ENCODE measurements at regions of chr1 and their contacts with region 1.

Region 1: DNA sequence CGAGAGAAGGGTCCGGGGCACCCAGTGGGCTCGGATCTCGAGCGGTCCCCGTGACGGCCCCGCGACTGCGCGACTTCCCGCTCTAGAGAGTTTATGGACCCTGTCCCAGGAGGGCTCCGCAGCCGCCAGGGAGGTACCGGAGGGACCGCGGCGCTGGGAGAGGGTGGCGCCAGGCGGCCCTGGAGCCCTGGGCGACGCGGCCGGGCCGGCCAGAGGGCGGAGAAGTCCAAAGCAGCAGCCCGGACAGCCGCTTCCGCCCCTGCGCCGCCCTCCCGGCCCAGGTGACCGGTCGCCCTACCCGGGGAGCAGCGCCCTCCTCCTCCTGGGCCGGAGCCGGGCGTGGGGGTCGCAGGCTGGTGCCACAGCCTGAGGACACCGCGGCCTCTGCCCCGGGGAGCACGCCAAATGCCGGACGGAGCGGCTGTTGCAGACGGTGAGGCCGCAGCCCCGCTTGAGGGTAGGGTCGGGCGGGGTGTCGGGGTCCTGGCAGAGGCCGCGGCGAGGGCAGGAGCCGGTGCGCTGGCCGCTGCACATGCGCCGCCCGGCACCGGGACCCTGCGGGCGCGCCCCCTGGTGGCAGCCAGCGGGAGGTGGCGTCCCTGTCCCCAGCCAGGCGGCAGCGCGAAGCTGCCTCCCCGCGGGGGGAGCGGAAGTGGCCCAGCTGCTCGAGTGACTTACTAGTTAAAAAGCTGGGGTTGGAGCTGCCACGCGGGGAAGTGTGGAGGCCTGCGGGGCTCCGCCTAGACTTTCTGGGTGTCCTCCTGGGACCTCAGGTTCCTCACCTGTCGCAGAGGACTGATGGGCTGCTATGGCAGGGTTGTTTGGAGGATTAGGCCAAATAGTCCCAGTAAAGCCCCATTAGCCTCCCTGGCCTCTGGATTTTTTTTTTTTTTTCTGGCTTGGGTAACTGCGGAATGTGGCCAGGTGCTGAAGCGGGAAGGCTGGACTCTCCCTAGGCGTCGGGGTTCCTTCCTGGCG is 20.9 kb upstream of the ZNF678 start:
- DNase-seq: peak; percentile 82 to 94 (median 90)
- ATAC-seq: peak; percentile 97
- H3K4me3 ChIP-seq: peak overlapping the region; percentile 55
- H3K4me3 Mint-ChIP-seq: peak overlapping the region; percentile 57 to 79 (median 67)
- H3K27ac ChIP-seq: peak overlapping the region; percentile 17
- H3K27ac Mint-ChIP-seq: peak overlapping the region in 7 of 9 donors; percentile 23 to 86 (median 56)
- H3K4me1 ChIP-seq: peaks cover 3 to 10% of the 10 kb centered on the region in 2 donors
- H3K4me1 Mint-ChIP-seq: peaks cover 0 to 7% (median 5%) of the 10 kb centered on the region in 7 donors
- H3K27me3 ChIP-seq: no peaks in the 10 kb centered on the region
- H3K27me3 Mint-ChIP-seq: peaks cover 0 to 6% (median 0%) of the 10 kb centered on the region in 5 donors

Region 2: DNA sequence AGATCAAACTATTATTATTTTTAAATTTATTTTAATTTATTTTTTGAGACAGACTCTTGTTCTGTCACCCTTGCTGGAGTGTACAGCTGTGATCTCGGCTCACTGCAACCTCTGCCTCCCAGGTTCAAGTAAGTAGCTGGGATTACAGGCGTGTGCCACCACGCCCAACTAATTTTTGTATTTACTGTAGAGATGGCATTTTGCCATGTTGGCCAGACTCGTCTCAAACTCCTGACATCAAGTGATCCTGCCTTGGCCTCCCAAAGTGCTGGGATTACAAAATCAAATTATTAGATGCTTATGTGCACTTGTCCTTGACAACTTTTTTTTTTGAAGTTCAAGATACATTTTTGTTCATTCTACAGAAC is 1248.9 kb before region 1 on chr1:
- CTCF ChIA-PET with region 1: no interaction called
- POLR2A ChIA-PET with region 1: no interaction called
- intact Hi-C with region 1: no loop called
- DNase-seq: no peak
- ATAC-seq: no peak
- H3K4me3 ChIP-seq: no peak overlapping the region
- H3K4me3 Mint-ChIP-seq: no peak overlapping the region
- H3K27ac ChIP-seq: no peak overlapping the region
- H3K27ac Mint-ChIP-seq: no peak overlapping the region
- H3K4me1 ChIP-seq: no peaks in the 10 kb centered on the region
- H3K4me1 Mint-ChIP-seq: no peaks in the 10 kb centered on the region
- H3K27me3 ChIP-seq: no peaks in the 10 kb centered on the region
- H3K27me3 Mint-ChIP-seq: no peaks in the 10 kb centered on the region

Region 3: GRCh38 chr1:226626577-226626956 is 915.9 kb before region 1 on chr1:
- CTCF ChIA-PET with region 1: no interaction called
- POLR2A ChIA-PET with region 1: no interaction called
- intact Hi-C with region 1: loop called (anchors 5 kb)
- DNase-seq: peak; percentile 62 to 85 (median 76)
- ATAC-seq: peak; percentile 97
- H3K4me3 ChIP-seq: peak overlapping the region; percentile 25
- H3K4me3 Mint-ChIP-seq: peak overlapping the region; percentile 29 to 72 (median 56)
- H3K27ac ChIP-seq: no peak overlapping the region
- H3K27ac Mint-ChIP-seq: peak overlapping the region in 7 of 9 donors; percentile 43 to 85 (median 67)
- H3K4me1 ChIP-seq: peaks cover 8 to 10% of the 10 kb centered on the region in 2 donors
- H3K4me1 Mint-ChIP-seq: peaks cover 9 to 33% (median 27%) of the 10 kb centered on the region in 7 donors
- H3K27me3 ChIP-seq: no peaks in the 10 kb centered on the region
- H3K27me3 Mint-ChIP-seq: peaks cover 0 to 8% (median 0%) of the 10 kb centered on the region in 5 donors

Region 4: GRCh38 chr1:227482023-227482299 is 60.5 kb before region 1 on chr1:
- CTCF ChIA-PET with region 1: no interaction called
- POLR2A ChIA-PET with region 1: no interaction called
- intact Hi-C with region 1: loop called (anchors 1 to 5 kb)
- DNase-seq: no peak
- ATAC-seq: no peak
- H3K4me3 ChIP-seq: no peak overlapping the region
- H3K4me3 Mint-ChIP-seq: no peak overlapping the region
- H3K27ac ChIP-seq: no peak overlapping the region
- H3K27ac Mint-ChIP-seq: no peak overlapping the region
- H3K4me1 ChIP-seq: no peaks in the 10 kb centered on the region
- H3K4me1 Mint-ChIP-seq: no peaks in the 10 kb centered on the region
- H3K27me3 ChIP-seq: no peaks in the 10 kb centered on the region
- H3K27me3 Mint-ChIP-seq: peaks cover 17 to 47% (median 27%) of the 10 kb centered on the region in 5 donors

Region 5: DNA sequence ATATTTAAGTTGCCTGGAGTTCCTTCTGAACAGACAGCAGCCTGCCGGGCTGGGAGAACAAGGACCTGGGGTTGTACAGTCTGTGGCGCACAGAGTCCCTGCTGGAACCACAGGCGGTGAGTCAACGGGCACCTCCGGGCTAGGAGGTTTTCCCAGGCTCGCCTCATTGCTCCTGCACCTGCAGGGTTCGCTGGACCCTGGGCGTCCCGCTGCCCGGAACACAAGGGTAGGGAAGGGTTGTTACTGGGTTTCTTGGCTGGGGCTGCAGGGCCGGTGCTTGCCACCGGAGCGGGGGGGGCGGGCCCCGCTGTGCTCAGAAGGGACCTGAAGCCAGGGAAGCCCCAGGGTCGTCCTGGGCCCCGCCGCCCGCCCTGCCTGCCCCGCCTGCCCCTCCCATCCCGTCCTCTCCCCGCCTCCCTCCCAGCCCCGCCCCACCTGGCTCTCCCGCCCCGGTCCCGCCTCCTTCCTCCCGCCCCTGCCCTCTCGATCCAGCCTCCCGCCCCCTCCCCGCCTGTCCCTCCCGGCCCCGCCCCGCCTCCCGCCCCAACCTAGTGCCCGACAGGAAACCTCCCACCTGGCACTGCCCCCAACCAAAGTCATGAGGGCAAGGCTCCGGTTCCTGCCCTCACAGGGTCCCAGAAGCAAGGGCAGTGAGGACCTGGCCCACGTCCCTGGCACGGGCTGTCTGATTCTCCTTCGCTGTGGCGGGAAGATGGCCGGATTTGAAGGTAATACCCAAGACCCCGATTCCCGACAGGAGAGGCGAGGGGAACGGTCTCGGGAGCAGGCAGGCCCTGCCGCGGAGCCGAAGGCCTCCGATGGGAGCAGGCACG is 185.8 kb after region 1 on chr1:
- CTCF ChIA-PET with region 1: no interaction called
- POLR2A ChIA-PET with region 1: no interaction called
- intact Hi-C with region 1: loop called in 1 of 2 experiments (anchors 1 kb)
- DNase-seq: peak in 7 of 9 donors; percentile 23 to 63 (median 39)
- ATAC-seq: peak; percentile 69
- H3K4me3 ChIP-seq: peak overlapping the region; percentile 59
- H3K4me3 Mint-ChIP-seq: peak overlapping the region; percentile 78 to 89 (median 87)
- H3K27ac ChIP-seq: peak overlapping the region; percentile 69
- H3K27ac Mint-ChIP-seq: peak overlapping the region; percentile 43 to 90 (median 74)
- H3K4me1 ChIP-seq: peaks cover 0 to 10% of the 10 kb centered on the region in 2 donors
- H3K4me1 Mint-ChIP-seq: peaks cover 6 to 29% (median 20%) of the 10 kb centered on the region in 7 donors
- H3K27me3 ChIP-seq: no peaks in the 10 kb centered on the region
- H3K27me3 Mint-ChIP-seq: peaks cover 0 to 11% (median 8%) of the 10 kb centered on the region in 5 donors

Region 6: GRCh38 chr1:227946624-227947385 is 404.4 kb after region 1 on chr1:
- CTCF ChIA-PET with region 1: no interaction called
- POLR2A ChIA-PET with region 1: no interaction called
- intact Hi-C with region 1: loop called in 1 of 2 experiments (anchors 10 kb)
- DNase-seq: peak in 8 of 9 donors; percentile 24 to 70 (median 60)
- ATAC-seq: peak; percentile 63
- H3K4me3 ChIP-seq: peak overlapping the region; percentile 17
- H3K4me3 Mint-ChIP-seq: peak overlapping the region; percentile 65 to 87 (median 74)
- H3K27ac ChIP-seq: no peak overlapping the region
- H3K27ac Mint-ChIP-seq: peak overlapping the region in 1 of 9 donors; percentile 23
- H3K4me1 ChIP-seq: peaks cover 0 to 7% of the 10 kb centered on the region in 2 donors
- H3K4me1 Mint-ChIP-seq: peaks cover 5 to 12% (median 8%) of the 10 kb centered on the region in 7 donors
- H3K27me3 ChIP-seq: no peaks in the 10 kb centered on the region
- H3K27me3 Mint-ChIP-seq: peaks cover 8 to 34% (median 13%) of the 10 kb centered on the region in 5 donors